ENCODE measurements at regions of chr4 and their contacts with region 1.

Region 1: DNA sequence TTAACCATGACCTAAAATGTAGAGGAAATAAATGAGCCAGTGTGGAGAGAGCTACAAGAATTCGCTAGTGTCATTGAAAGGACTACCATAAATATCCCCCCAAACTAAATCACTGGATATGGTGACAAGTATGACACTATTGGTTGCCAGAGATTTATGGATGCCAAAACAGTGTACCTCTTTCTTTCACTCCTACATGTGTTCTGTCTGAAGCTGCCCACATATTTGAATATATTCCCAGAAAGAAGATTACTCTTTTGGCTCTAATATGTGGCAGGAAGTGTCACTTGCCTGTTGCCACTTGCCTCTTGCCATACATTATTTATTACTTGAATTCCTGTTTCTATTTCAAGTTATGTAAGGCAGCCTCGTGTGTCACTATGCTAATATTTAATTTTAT is 1573.6 kb downstream of the TECRL start:
- DNase-seq: no peak
- ATAC-seq: no peak
- H3K4me3 ChIP-seq: no peak overlapping the region
- H3K27ac ChIP-seq: no peak overlapping the region
- H3K4me1 ChIP-seq: no peaks in the 10 kb centered on the region
- H3K27me3 ChIP-seq: no peaks in the 10 kb centered on the region
- CTCF ChIP-seq: no peak
- POLR2A ChIP-seq: no peak
- RAD21 ChIP-seq: no peak

Region 2: GRCh38 chr4:60897415-60897814 is 1938.2 kb before region 1 on chr4:
- CTCF ChIA-PET with region 1: no interaction called
- POLR2A ChIA-PET with region 1: no interaction called
- RAD21 ChIA-PET with region 1: no interaction called
- intact Hi-C with region 1: loop called (anchors 5 kb)
- DNase-seq: no peak
- ATAC-seq: no peak
- H3K4me3 ChIP-seq: no peak overlapping the region
- H3K27ac ChIP-seq: no peak overlapping the region
- H3K4me1 ChIP-seq: no peaks in the 10 kb centered on the region
- H3K27me3 ChIP-seq: no peaks in the 10 kb centered on the region
- CTCF ChIP-seq: no peak
- POLR2A ChIP-seq: no peak
- RAD21 ChIP-seq: no peak